ENCODE measurements at regions of chr13 and their contacts with region 1.

Region 1: DNA sequence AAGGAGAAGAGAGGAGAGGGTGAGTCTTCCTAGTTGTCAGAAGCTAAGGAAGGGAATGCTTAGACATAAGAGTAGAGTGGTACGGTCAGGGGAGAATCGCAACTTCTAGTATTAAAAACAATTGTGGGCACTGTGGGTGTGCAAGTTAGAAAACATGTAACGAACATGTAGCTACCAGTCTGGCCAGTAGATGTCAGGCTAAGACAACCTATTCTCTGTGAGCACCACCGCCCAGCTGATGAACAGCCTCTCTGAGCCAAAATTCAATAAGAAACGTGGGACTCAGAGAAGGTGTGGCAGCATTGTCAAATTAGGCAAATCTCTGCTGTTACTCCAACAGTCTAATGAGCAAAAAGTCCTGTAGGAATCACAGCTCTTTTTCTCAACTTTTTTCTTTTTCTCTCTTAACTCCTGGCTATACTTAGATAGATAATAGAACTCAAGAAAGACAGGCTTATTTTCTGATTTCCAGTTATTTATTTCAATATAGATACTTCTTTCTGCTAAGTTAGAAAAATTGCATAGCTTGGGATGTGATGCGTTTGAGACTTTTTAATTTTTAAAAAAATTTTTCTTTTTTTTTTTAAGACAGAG is 186.2 kb downstream of the USP12 start:
- DNase-seq: peak; percentile 82
- H3K4me3 ChIP-seq: no peak overlapping the region
- H3K27ac ChIP-seq: no peak overlapping the region
- H3K4me1 ChIP-seq: no peaks in the 10 kb centered on the region
- H3K27me3 ChIP-seq: peaks cover 6% of the 10 kb centered on the region
- CTCF ChIP-seq: peak; percentile 78

Region 2: GRCh38 chr13:27203854-27204253 is 218.5 kb after region 1 on chr13:
- CTCF ChIA-PET with region 1: no interaction called
- POLR2A ChIA-PET with region 1: no interaction called
- intact Hi-C with region 1: loop called (anchors 10 kb)
- DNase-seq: no peak
- H3K4me3 ChIP-seq: no peak overlapping the region
- H3K27ac ChIP-seq: no peak overlapping the region
- H3K4me1 ChIP-seq: peaks cover 4% of the 10 kb centered on the region
- H3K27me3 ChIP-seq: peaks cover 6% of the 10 kb centered on the region
- CTCF ChIP-seq: peak; percentile 23; the same call in 1 of the 2 replicates

Region 3: GRCh38 chr13:27977476-27978300 is 992.3 kb after region 1 on chr13:
- CTCF ChIA-PET with region 1: no interaction called
- POLR2A ChIA-PET with region 1: no interaction called
- intact Hi-C with region 1: loop called (anchors 10 kb)
- DNase-seq: peak; percentile 22
- H3K4me3 ChIP-seq: no peak overlapping the region
- H3K27ac ChIP-seq: no peak overlapping the region
- H3K4me1 ChIP-seq: no peaks in the 10 kb centered on the region
- H3K27me3 ChIP-seq: peaks cover 100% of the 10 kb centered on the region
- CTCF ChIP-seq: no peak

Measured in A673 (cell line).